ENCODE measurements at regions of chr11 and their contacts with region 1.

Region 1: DNA sequence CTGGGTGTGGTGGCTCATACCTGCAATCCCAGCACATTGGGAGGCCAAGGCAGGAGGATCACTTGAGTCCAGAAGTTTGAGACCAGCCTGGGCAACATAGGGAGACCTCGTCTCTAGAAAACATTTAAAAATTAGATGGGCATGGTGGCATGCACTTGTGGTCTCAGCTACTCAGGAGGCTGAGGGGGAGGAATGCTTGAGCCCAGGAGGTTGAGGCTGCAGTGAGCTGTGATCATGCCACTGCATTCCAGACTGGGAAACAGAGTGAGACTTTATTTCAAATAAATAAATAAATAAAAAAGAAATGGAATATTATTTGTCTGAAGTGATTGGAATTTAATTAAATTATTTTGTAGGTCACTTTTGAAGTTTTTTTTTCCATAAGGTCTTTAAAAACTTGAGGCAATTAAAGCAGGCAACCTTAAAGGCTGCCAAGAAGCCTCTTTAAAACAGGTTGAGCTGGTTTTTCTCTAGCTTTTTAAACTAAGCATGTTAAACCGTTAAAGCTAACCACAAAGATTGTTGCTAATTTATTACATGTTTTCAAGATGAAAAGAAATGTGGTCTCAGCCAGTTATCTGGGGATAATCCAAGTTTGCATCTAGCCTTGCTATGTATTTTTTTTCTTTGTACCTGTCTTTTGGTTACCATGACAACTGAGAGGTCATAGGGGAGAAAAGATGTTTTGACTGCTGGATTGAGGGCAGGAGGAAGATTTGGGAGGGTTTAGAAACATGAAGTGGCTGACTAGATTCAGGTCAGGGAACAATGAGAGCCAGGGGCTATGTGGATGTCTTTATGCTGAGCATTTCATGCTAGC is 19.0 kb upstream of the PGM2L1 start:
- DNase-seq: no peak
- H3K4me3 Mint-ChIP-seq: peak overlapping the region; percentile 20
- H3K27ac Mint-ChIP-seq: peak overlapping the region; percentile 85
- H3K4me1 Mint-ChIP-seq: peaks cover 20% of the 10 kb centered on the region
- H3K27me3 Mint-ChIP-seq: peaks cover 4% of the 10 kb centered on the region

Region 2: DNA sequence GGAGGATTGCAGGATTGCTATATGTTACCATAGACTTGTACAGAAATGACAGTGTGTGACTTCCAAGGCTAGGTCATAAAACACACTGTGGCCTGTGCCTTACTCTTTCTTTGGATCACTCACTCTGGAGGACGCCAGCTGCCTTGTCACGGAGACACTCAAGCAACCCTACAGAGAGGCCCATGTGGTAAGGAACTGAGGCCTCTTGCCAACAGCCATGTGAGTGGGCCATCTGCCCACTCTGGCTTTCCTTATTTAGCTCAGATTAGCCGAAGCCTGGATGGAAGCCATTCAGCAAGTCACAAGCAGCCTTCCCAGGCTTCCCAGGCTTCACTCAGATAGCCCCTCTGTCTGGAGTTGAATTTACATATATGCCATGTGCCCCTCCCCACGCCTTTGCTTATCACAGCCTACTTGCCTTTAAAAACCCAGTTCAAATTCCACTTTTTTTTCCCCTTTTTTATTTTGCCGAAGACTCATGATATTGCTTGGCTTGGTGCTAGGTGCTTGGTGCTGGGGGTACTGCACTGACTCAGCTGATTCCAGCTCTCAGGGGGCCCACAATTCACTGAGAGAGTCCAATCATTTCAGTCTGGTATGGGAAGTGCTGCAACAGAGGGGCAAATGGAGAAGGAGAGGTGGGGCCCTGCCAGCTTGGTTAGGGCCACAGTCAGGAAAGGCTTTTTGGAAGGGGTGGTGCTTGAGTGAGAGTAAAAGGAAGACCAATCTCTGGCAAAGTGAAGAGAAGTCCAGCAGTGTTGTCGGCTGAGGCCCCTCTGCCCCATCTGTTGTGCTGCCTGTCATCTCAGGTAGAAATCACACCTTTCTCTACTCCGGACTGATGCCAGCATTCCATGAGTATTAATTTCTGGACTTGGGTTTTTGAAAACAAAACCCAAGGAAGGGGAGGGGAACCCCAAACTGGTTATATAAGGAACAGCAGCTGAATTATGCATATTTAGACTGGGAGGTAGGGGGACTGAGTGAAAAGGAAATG is 91.2 kb before region 1 on chr11:
- intact Hi-C with region 1: no loop called
- DNase-seq: no peak
- H3K4me3 Mint-ChIP-seq: no peak overlapping the region
- H3K27ac Mint-ChIP-seq: no peak overlapping the region
- H3K4me1 Mint-ChIP-seq: no peaks in the 10 kb centered on the region
- H3K27me3 Mint-ChIP-seq: peaks cover 10% of the 10 kb centered on the region

Region 3: GRCh38 chr11:74388678-74389327 is 28.4 kb before region 1 on chr11:
- intact Hi-C with region 1: loop called (anchors 2 kb)
- DNase-seq: peak; percentile 90
- H3K4me3 Mint-ChIP-seq: no peak overlapping the region
- H3K27ac Mint-ChIP-seq: no peak overlapping the region
- H3K4me1 Mint-ChIP-seq: peaks cover 15% of the 10 kb centered on the region
- H3K27me3 Mint-ChIP-seq: no peaks in the 10 kb centered on the region

Region 4: GRCh38 chr11:74398244-74399159 is 18.7 kb before region 1 on chr11 and contains the start of gene PGM2L1:
- intact Hi-C with region 1: loop called (anchors 2 kb)
- DNase-seq: peak; percentile 97
- H3K4me3 Mint-ChIP-seq: peak within 1 kb of the TSS; percentile 97
- H3K27ac Mint-ChIP-seq: peak within 1 kb of the TSS; percentile 100
- H3K4me1 Mint-ChIP-seq: peaks cover 24% of the 10 kb centered on the region
- H3K27me3 Mint-ChIP-seq: no peaks in the 10 kb centered on the region
- total RNA-seq, gene PGM2L1: 4.7 and 4.9 TPM in 2 replicates